Left cardiac atrium (tissue), 4 donors: ENCODE measurements at regions of chr18 and their contacts with region 1.

Region 1: GRCh38 chr18:11387880-11388279 is 221.5 kb upstream of the SLC35G4 start:
- DNase-seq: peak; percentile 79
- ATAC-seq: peak; percentile 64 to 88

Region 2: DNA sequence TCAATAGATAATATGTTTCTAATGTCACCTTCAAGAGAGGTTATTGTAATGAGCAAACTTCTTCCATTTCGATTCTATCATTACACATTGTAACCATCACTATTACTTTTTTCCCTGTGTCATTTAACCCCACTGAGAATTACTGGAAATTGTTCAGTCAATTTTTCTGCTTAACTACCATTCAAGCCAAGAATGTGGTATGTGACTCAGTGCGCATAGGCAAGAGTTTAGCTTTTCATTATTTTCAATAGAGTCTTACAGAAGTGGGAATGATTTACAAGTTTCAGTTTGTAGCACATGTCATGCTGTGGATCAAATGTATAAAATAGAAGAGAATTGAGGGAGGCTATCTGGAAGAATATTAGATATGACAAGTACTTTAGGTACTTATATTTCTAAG is 204.2 kb before region 1 on chr18:
- intact Hi-C with region 1: loop called in 1 of 2 experiments (anchors 10 kb)
- DNase-seq: no peak
- ATAC-seq: no peak

Region 3: GRCh38 chr18:11310476-11311086 is 77.3 kb before region 1 on chr18:
- intact Hi-C with region 1: loop called in 1 of 2 experiments (anchors 2 kb)
- DNase-seq: peak; percentile 40
- ATAC-seq: peak; percentile 59 to 72

Region 4: GRCh38 chr18:11437046-11437445 is 49.2 kb after region 1 on chr18:
- intact Hi-C with region 1: no loop called
- DNase-seq: no peak
- ATAC-seq: no peak

Region 5: GRCh38 chr18:11482271-11482670 is 94.4 kb after region 1 on chr18:
- intact Hi-C with region 1: no loop called
- DNase-seq: no peak
- ATAC-seq: no peak